Left cardiac atrium (tissue), 4 donors: ENCODE measurements at regions of chr15 and their contacts with region 1.

Region 1: DNA sequence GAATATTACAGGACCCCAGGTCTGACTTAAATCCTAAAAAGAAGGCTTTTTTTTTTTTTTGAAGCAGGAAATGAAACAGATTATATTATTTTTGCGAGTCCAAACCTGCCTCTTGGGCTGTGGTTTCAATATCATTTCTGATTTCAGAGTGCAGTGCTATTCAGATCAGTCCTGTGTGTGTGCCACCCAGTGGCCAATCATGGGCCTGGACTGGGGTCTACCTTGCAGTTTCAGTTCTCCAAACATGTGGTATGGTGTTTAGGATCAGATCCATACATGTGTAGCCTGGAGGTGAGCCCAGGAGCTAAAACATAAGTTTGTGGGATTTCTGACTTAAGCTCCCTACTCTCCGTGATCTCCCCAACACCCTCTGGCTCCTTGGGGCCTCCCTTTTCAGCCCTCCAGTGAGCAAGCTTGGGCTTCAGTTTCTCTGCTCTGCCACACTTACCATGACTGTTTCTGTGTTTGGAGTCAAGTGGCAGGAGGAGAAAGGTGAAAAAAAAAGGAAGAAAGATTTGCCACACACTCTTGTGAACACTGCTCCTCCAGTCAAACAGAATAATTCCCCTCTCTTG is 12.1 kb upstream of the THSD4 start:
- DNase-seq: peak; percentile 41
- ATAC-seq: peak in 1 of 2 donors; percentile 50

Region 2: GRCh38 chr15:70892002-70892914 is 210.9 kb before region 1 on chr15 and contains the starts of genes LRRC49 and THAP10:
- intact Hi-C with region 1: loop called in 1 of 2 experiments (anchors 10 kb)
- DNase-seq: peak; percentile 91
- ATAC-seq: peak; percentile 98 to 99
- total RNA-seq, gene LRRC49: 33.0 to 33.1 TPM
- total RNA-seq, gene THAP10: 3.2 to 3.6 TPM

Region 3: DNA sequence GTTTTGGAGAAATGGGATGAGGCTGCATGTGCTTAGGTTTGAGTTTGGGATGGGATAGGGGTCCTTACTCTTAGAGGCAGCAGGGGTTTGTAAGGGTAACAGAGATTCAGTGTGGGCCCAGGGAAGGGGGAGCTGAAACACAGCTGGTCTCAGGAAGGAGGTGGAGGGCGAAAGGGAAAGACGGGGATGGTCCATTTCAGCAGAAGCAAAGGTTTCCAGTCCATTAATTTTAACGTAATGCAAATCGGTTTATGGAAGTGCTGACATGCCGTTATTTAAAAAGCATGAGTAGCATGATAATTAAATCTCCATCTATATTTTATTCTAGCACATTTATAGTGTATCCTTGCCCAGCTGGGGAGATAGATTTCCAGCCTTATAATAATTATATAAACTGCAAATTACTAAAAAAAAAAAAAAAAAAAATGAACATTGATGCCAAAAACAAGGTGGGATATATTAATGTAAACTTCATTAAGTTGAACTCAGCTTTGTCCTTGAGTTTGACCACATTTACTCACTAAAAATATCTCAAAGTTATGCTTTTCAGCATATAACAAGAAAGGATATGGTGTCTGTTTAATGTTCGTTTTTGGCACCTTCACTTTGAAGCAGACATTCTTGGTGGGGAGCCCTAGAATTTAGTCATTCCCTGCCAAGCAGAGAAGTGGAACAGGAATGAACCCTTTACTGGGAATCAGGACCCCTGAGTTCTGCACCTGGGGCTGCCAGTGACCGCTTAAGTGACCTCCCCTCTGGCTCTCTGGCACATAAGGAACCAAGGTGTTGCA is 246.7 kb after region 1 on chr15:
- intact Hi-C with region 1: no loop called
- DNase-seq: no peak
- ATAC-seq: no peak